ENCODE measurements at regions of chr12 and their contacts with region 1.

Region 1: GRCh38 chr12:108803428-108804105 is 53.8 kb downstream of the SSH1 start:
- DNase-seq: peak; percentile 69 to 81 (median 78)
- H3K4me3 ChIP-seq: no peak overlapping the region
- H3K4me3 Mint-ChIP-seq: no peak overlapping the region
- H3K27ac ChIP-seq: peak overlapping the region in 1 of 2 donors; percentile 4
- H3K27ac Mint-ChIP-seq: peak overlapping the region in 5 of 7 donors; percentile 65 to 90 (median 87)
- H3K4me1 ChIP-seq: peaks cover 3 to 4% of the 10 kb centered on the region in 2 donors
- H3K4me1 Mint-ChIP-seq: peaks cover 4% of the 10 kb centered on the region
- H3K27me3 ChIP-seq: no peaks in the 10 kb centered on the region
- H3K27me3 Mint-ChIP-seq: no peaks in the 10 kb centered on the region
- CTCF ChIP-seq: peak; percentile 90

Region 2: DNA sequence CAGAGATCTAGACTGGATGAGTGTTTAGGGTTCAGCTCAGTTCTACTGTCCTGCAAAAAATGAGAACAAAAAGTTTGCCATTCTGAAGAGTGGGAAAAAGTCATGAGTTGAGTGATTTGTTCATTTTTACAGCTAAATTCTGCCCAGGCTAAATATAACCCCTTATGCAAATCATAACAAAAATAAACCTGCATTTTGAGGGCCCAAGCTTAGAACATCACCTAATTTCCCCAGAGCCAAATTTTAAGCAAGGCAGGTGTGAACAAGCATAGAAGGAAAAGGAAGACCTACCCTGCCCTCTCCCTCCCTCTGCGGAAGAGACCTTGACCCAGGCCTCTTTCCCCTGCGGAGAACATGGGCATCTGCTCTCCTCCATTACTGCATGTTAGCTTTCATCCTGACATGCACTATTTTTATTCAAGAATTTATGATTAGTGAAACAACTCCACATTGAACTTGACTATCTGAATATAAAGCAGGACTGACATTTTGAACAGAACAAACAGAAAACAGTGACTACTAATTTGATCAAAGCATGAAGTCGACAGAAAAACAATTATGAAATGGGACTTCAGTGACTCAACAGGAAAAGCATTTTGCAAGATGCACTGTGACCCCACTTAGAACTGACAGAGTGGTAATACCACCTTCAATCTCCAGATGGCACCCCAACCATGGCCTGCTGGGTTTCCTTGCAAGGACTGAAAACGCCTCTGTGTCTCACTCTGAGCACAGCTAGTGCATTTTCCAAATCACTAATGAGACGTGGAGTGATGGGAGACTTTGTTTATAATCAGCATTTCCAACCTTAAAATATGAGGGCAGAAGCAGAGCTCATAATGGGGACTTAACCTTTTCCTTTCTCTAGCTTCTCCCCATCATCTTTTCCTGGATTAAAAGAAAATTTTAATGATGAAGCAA is 139.0 kb before region 1 on chr12:
- intact Hi-C with region 1: loop called (anchors 2 to 5 kb)
- DNase-seq: peak; percentile 95 to 97 (median 95)
- H3K4me3 ChIP-seq: peak overlapping the region; percentile 5 to 67 (median 43)
- H3K4me3 Mint-ChIP-seq: peak overlapping the region; percentile 61 to 86
- H3K27ac ChIP-seq: peak overlapping the region; percentile 88 to 95
- H3K27ac Mint-ChIP-seq: peak overlapping the region; percentile 97 to 99 (median 99)
- H3K4me1 ChIP-seq: peaks cover 54 to 61% of the 10 kb centered on the region in 2 donors
- H3K4me1 Mint-ChIP-seq: peaks cover 59% of the 10 kb centered on the region
- H3K27me3 ChIP-seq: no peaks in the 10 kb centered on the region
- H3K27me3 Mint-ChIP-seq: no peaks in the 10 kb centered on the region
- CTCF ChIP-seq: peak; percentile 93

Region 3: GRCh38 chr12:108856428-108857157 is 53.0 kb after region 1 on chr12:
- intact Hi-C with region 1: loop called in 1 of 2 experiments (anchors 10 kb)
- DNase-seq: peak; percentile 84 to 93 (median 90)
- H3K4me3 ChIP-seq: peak overlapping the region; percentile 79 to 89 (median 82)
- H3K4me3 Mint-ChIP-seq: peak overlapping the region; percentile 97 to 100
- H3K27ac ChIP-seq: peak overlapping the region; percentile 70 to 98
- H3K27ac Mint-ChIP-seq: peak overlapping the region; percentile 94 to 99 (median 98)
- H3K4me1 ChIP-seq: peaks cover 71 to 77% of the 10 kb centered on the region in 2 donors
- H3K4me1 Mint-ChIP-seq: peaks cover 74% of the 10 kb centered on the region
- H3K27me3 ChIP-seq: no peaks in the 10 kb centered on the region
- H3K27me3 Mint-ChIP-seq: peaks cover 0 to 2% (median 0%) of the 10 kb centered on the region in 3 donors
- CTCF ChIP-seq: no peak

Region 4: GRCh38 chr12:108868781-108869180 is 65.2 kb after region 1 on chr12:
- intact Hi-C with region 1: no loop called
- DNase-seq: no peak
- H3K4me3 ChIP-seq: no peak overlapping the region
- H3K4me3 Mint-ChIP-seq: no peak overlapping the region
- H3K27ac ChIP-seq: no peak overlapping the region
- H3K27ac Mint-ChIP-seq: no peak overlapping the region
- H3K4me1 ChIP-seq: peaks cover 4 to 6% of the 10 kb centered on the region in 2 donors
- H3K4me1 Mint-ChIP-seq: peaks cover 9% of the 10 kb centered on the region
- H3K27me3 ChIP-seq: no peaks in the 10 kb centered on the region
- H3K27me3 Mint-ChIP-seq: no peaks in the 10 kb centered on the region
- CTCF ChIP-seq: no peak